Dendritic cell treated with granulocyte-macrophage colony-stimulating factor and Interleukin-4, amounts not matched to agents 40 ng/mL and 50 ng/mL, for 4 days (primary cell): ENCODE measurements at regions of chr4 and their contacts with region 1.

Region 1: GRCh38 chr4:177047070-177047850 is 254.5 kb upstream of the VEGFC start:
- H3K4me3 Mint-ChIP-seq: no peak overlapping the region
- H3K27ac Mint-ChIP-seq: no peak overlapping the region
- H3K4me1 Mint-ChIP-seq: no peaks in the 10 kb centered on the region
- H3K27me3 Mint-ChIP-seq: no peaks in the 10 kb centered on the region

Region 2: GRCh38 chr4:176034499-176034898 is 1012.8 kb before region 1 on chr4:
- intact Hi-C with region 1: loop called (anchors 5 kb)
- H3K4me3 Mint-ChIP-seq: no peak overlapping the region
- H3K27ac Mint-ChIP-seq: no peak overlapping the region
- H3K4me1 Mint-ChIP-seq: no peaks in the 10 kb centered on the region
- H3K27me3 Mint-ChIP-seq: no peaks in the 10 kb centered on the region

Region 3: GRCh38 chr4:176377780-176378179 is 669.5 kb before region 1 on chr4:
- intact Hi-C with region 1: loop called (anchors 5 kb)
- H3K4me3 Mint-ChIP-seq: no peak overlapping the region
- H3K27ac Mint-ChIP-seq: no peak overlapping the region
- H3K4me1 Mint-ChIP-seq: no peaks in the 10 kb centered on the region
- H3K27me3 Mint-ChIP-seq: no peaks in the 10 kb centered on the region

Region 4: DNA sequence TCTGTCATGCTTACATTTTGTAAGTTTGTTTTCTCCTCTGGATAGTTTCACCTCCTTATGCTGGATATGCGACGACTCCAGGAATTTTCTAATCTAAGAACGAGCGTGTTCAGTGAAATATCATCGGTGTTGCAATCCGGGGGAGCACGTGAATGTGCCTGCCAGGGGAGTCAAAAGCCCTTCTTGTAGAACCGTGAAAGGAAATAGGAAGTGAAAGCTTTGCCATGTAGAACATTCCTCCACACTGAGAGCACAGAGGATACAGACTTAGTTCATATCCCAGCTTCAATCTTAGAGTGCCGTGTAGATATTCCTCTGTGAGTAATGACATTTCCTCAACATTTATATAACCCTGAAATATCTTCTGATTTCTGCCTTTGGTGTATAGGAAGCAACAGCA is 375.7 kb before region 1 on chr4:
- intact Hi-C with region 1: no loop called
- H3K4me3 Mint-ChIP-seq: no peak overlapping the region
- H3K27ac Mint-ChIP-seq: no peak overlapping the region
- H3K4me1 Mint-ChIP-seq: no peaks in the 10 kb centered on the region
- H3K27me3 Mint-ChIP-seq: no peaks in the 10 kb centered on the region

Region 5: DNA sequence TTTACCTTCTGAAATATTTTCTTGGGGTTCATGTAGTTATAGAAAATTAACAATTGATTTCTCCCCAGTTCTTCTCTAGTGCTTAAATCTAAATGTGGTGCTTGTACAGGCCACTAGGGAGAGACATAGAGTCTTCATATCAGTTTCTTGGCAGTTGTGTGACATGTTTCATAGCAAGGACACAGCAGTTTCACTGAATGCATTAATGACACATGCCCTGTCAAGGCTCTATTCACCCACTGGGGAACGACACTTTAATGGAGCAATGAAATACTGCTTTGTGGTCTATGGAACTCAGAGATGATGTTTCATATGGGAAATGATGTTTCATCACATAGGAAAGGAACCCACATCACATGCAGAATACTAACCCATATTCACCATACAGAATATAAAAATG is 257.3 kb before region 1 on chr4:
- intact Hi-C with region 1: loop called (anchors 10 kb)
- H3K4me3 Mint-ChIP-seq: no peak overlapping the region
- H3K27ac Mint-ChIP-seq: no peak overlapping the region
- H3K4me1 Mint-ChIP-seq: peaks cover 7% of the 10 kb centered on the region
- H3K27me3 Mint-ChIP-seq: peaks cover 44% of the 10 kb centered on the region

Region 6: DNA sequence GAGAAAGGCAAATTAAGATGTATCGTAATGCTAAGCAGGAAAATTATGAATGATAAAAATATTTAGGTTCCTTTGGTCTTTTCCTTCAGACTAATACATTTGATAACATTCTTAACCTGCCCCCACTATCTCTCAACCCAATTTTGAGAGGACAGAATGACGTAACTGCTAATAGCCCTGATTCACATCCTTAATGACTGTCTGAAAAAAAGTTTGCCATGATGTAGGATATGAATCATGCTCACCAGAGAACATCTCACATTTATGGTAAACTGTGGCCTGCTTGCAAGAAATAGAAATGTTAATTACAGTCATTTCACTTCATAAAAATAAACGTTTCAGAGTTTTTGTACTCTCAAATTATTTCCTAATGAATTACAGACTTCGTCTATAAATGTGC is 126.6 kb before region 1 on chr4:
- intact Hi-C with region 1: no loop called
- H3K4me3 Mint-ChIP-seq: no peak overlapping the region
- H3K27ac Mint-ChIP-seq: no peak overlapping the region
- H3K4me1 Mint-ChIP-seq: no peaks in the 10 kb centered on the region
- H3K27me3 Mint-ChIP-seq: no peaks in the 10 kb centered on the region

Region 7: DNA sequence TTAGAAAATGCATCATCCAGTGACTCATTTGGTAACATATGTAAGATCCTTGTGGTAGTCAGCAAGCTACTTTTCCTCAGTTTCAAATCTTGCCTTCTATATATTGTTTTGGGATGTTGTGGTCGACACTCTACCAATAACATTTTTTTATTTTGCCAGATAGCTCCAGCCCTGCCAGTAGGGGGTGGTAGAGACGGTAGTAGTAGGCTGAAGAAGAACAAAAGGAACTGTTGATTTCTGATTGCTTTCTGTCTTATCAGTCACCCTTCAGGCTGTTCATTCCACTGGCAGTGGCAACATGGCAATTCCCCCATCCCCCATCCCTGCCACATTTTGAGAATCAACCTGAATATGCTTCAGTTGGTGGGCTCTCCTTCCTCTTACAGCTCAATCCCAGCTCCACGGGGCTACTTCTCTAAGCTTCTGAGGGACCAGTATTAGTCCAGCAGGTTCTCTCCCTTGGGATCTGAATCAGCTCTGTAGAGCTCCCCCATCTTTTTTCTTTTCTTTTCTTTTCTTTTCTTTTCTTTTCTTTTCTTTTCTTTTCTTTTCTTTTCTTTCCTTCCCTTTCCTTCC is 83.1 kb before region 1 on chr4:
- intact Hi-C with region 1: loop called (anchors 1 kb)
- H3K4me3 Mint-ChIP-seq: no peak overlapping the region
- H3K27ac Mint-ChIP-seq: no peak overlapping the region
- H3K4me1 Mint-ChIP-seq: no peaks in the 10 kb centered on the region
- H3K27me3 Mint-ChIP-seq: peaks cover 2% of the 10 kb centered on the region

Region 8: DNA sequence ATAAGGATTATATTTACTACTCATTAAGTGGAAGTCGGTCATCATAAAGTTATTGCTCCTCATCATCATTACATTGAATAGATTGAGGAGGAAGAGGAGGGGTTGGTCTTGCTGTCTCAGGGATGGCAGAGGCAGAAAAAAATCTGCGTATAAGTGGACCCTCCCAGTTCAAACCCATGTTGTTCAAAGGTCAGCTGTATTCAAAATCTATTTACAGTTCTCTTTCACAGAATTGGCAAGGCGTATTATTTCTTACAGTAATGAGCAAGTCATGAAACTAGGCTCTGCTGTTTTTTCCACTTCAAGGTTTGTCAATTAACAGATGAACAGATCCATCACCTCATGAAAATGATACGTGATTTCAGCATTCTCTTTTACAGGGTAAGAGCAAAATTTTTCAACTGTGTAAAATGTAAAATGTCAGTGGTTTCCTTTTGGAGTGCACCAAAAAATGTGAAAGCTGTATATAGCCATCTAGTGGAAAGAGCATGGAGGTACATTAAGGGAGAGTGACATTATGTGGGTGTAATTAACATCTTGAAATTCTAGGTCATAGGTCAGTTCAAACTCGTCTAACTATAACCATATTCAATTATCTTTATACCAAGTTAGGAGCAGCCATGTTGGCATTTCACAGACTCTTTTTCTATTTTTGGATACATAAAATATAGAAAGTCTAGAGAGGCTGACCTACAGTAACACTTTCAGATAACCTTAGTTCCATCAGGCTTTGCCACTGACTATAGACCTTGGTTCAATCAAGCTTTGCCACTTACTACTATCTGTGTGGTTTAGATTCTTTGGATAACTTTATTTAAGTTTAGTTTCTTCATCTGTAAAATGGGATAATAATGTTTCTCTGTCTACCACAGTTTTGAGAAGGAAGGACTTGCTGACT is 292.5 kb after region 1 on chr4:
- intact Hi-C with region 1: loop called (anchors 5 kb)
- H3K4me3 Mint-ChIP-seq: no peak overlapping the region
- H3K27ac Mint-ChIP-seq: no peak overlapping the region
- H3K4me1 Mint-ChIP-seq: no peaks in the 10 kb centered on the region
- H3K27me3 Mint-ChIP-seq: no peaks in the 10 kb centered on the region